Endothelial cell of umbilical vein (primary cell): ENCODE measurements at regions of chr2 and their contacts with region 1.

Region 1: GRCh38 chr2:42095923-42096408 is 48.1 kb downstream of the PKDCC start:
- DNase-seq: peak; percentile 75
- H3K4me3 ChIP-seq: no peak overlapping the region
- H3K27ac ChIP-seq: no peak overlapping the region
- H3K4me1 ChIP-seq: peaks cover 10% of the 10 kb centered on the region
- H3K27me3 ChIP-seq: no peaks in the 10 kb centered on the region
- CTCF ChIP-seq: peak; percentile 50 to 52
- POLR2A ChIP-seq: no peak

Region 2: GRCh38 chr2:41853427-41854216 is 242.3 kb before region 1 on chr2:
- CTCF ChIA-PET with region 1: interaction called, 372 read pairs
- POLR2A ChIA-PET with region 1: no interaction called
- dilution Hi-C with region 1: loop called (anchors 25 kb)
- intact Hi-C with region 1: no loop called
- DNase-seq: peak; percentile 53
- H3K4me3 ChIP-seq: no peak overlapping the region
- H3K27ac ChIP-seq: no peak overlapping the region
- H3K4me1 ChIP-seq: no peaks in the 10 kb centered on the region
- H3K27me3 ChIP-seq: peaks cover 4% of the 10 kb centered on the region in 2 experiments
- CTCF ChIP-seq: peak; percentile 53 to 66
- POLR2A ChIP-seq: no peak

Region 3: GRCh38 chr2:42196403-42197267 is 100.7 kb after region 1 on chr2:
- CTCF ChIA-PET with region 1: interaction called, 33 read pairs
- POLR2A ChIA-PET with region 1: no interaction called
- dilution Hi-C with region 1: no loop called
- intact Hi-C with region 1: loop called (anchors 1 kb)
- DNase-seq: peak; percentile 29
- H3K4me3 ChIP-seq: no peak overlapping the region
- H3K27ac ChIP-seq: no peak overlapping the region
- H3K4me1 ChIP-seq: peaks cover 9% of the 10 kb centered on the region
- H3K27me3 ChIP-seq: no peaks in the 10 kb centered on the region
- CTCF ChIP-seq: peak; percentile 11 to 28
- POLR2A ChIP-seq: no peak

Region 4: DNA sequence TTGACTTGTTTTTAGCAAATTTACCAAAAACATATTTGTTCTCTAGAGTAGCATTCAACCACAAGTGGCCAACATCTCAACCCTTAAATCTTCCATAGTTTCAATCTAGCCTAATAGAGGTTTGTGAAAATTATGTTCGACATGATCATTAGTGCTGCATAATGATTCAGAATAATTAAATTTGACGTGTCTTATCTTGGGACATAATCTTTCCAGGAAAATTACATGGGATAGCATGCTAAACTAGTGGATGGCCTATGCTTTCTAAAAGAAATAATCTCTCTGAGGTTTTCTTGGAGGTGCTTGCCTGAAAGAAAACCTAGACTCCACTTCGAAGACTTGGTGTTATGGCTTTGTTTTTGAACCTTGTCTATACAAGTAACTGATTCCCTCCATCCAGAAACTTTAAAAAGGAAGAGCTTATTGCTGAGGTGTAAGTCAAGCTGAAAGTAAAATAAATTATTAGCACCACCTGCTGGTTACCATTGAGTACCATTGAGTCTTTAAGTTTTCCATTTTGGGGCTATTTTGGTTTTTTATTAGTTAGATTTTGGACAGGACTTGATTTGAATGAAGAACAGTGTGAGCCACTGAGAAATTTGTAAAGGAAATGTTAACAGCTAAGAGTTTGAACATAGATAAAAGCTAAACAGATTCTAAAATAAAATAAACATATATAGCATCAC is 232.3 kb after region 1 on chr2:
- CTCF ChIA-PET with region 1: interaction called, 369 read pairs
- POLR2A ChIA-PET with region 1: no interaction called
- dilution Hi-C with region 1: no loop called
- intact Hi-C with region 1: loop called (anchors 1 kb)
- DNase-seq: peak; percentile 54
- H3K4me3 ChIP-seq: no peak overlapping the region
- H3K27ac ChIP-seq: no peak overlapping the region
- H3K4me1 ChIP-seq: no peaks in the 10 kb centered on the region
- H3K27me3 ChIP-seq: no peaks in the 10 kb centered on the region
- CTCF ChIP-seq: peak; percentile 32 to 36
- POLR2A ChIP-seq: no peak

Region 5: DNA sequence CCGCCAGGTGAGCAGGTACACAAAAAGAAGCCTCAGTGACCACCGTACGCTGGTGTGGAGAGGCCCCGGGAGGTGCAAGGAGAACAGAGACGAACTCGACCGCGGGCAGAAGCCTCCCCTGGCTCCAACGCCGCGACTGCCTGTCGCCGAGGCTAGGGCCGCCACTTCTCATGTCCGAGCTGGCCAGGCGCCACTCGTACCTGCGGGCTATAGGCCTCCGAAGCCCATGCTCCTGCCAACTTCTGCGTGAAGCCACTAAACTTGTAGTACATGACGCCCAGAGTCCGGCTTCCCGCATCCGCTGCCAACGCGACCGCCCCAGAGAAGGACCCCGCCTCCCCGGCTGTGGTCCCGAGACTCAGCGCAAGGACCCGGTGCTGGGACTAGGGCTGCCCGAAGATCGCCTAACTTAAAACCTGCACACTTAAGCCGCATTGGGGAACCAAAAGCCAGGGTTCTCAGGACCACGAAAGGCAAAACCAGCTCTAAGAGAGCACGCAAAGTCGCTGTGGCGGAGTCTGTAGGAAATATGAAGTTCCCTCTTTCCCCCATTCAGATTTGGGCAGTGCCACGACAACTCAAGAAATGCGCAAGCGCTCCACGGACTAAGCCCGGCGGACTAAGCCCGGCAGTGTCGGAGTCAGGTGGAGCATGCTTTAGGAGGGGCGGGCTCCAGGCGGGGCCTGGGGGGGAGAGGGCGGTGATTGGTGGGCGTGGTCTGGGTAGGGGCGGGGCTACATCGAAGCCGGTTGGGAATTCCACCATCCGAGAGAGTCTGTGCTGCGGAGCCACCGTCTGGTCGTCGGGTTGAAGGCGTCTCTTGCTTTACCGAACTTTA is 265.1 kb after region 1 on chr2 and contains the start of gene COX7A2L:
- CTCF ChIA-PET with region 1: interaction called, 8 read pairs
- POLR2A ChIA-PET with region 1: no interaction called
- dilution Hi-C with region 1: no loop called
- intact Hi-C with region 1: loop called (anchors 1 kb)
- DNase-seq: peak; percentile 97
- H3K4me3 ChIP-seq: peak within 1 kb of the TSS; percentile 61 to 92 (median 77)
- H3K27ac ChIP-seq: peak within 1 kb of the TSS; percentile 97
- H3K4me1 ChIP-seq: peaks cover 18% of the 10 kb centered on the region
- H3K27me3 ChIP-seq: peaks cover 1 to 2% of the 10 kb centered on the region in 2 experiments
- CTCF ChIP-seq: peak in 1 of 2 donors; percentile 33
- POLR2A ChIP-seq: peak; percentile 73
- total RNA-seq, gene COX7A2L: 94.2 and 101 TPM in 2 replicates

Region 6: DNA sequence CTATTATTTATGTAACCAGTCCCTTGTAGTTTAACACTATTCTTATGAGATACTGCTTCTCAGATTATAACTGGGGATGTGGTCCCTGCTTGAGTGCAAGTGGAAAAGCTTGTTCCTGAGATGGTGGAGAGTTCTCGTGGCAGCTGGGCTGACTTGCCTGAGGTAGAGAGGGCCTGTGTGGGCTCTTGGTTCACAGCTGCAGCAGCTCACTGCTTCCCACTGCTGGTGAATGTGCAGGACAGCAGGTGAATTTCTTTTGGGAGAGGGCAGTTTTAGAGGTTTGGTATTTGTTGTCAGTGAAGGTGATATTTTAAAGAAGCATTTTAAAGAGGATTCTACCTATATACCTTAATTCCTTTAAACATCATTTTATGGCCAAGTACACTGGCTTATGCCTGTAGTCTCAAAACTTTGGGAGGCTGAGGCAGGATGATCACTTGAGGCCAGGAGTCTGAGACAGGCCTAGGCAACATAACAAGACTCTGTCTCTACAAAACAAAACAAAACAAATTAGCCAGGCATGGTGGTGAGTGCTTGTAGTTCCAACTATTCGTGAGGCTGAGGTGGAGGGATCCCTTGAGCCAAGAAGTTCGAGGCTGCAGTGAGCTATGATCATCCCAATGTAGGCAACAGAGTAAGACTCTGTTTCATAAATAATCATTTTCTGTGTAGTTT is 567.3 kb after region 1 on chr2:
- CTCF ChIA-PET with region 1: interaction called, 3 read pairs
- POLR2A ChIA-PET with region 1: no interaction called
- dilution Hi-C with region 1: no loop called
- intact Hi-C with region 1: loop called (anchors 2 kb)
- DNase-seq: peak; percentile 82
- H3K4me3 ChIP-seq: no peak overlapping the region
- H3K27ac ChIP-seq: no peak overlapping the region
- H3K4me1 ChIP-seq: no peaks in the 10 kb centered on the region
- H3K27me3 ChIP-seq: no peaks in the 10 kb centered on the region
- CTCF ChIP-seq: peak; percentile 94 to 97
- POLR2A ChIP-seq: no peak